ENCODE measurements at regions of chr13 and their contacts with region 1.

Region 1: DNA sequence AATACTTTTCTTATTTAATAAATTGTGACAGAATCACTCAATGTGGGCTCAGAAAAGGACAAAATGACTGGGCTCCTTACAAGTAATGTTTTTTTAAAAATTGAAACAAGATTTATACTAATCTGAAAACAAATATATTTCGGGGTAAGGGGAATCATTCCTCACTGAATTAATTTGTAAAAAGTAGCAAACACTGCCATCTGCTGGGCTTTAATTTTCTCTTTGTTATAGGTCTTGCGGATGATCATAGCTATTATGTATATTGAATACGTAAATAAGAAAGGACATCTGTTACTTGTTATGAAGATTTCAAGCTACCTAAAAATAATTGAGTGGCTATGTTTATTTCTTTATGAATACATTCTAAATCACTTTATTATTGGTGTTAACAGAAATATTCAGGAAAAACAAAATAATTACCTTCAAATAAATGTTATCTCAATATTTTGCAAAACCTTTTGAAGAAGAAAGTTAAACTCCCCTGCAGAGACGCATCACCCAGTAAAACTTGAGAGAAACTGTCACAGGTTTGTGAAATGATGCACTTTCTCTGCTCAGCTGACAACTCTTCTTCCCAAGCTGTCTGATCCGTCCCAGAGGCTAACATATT is 17.8 kb upstream of the ENOX1 start:
- DNase-seq: peak; percentile 83
- H3K4me3 ChIP-seq: no peak overlapping the region
- H3K27ac ChIP-seq: no peak overlapping the region
- H3K4me1 ChIP-seq: no peaks in the 10 kb centered on the region
- H3K27me3 ChIP-seq: no peaks in the 10 kb centered on the region
- CTCF ChIP-seq: peak; percentile 67

Region 2: GRCh38 chr13:42594970-42595571 is 1209.5 kb before region 1 on chr13:
- CTCF ChIA-PET with region 1: no interaction called
- POLR2A ChIA-PET with region 1: no interaction called
- intact Hi-C with region 1: loop called (anchors 5 kb)
- DNase-seq: peak; percentile 77
- H3K4me3 ChIP-seq: no peak overlapping the region
- H3K27ac ChIP-seq: no peak overlapping the region
- H3K4me1 ChIP-seq: no peaks in the 10 kb centered on the region
- H3K27me3 ChIP-seq: peaks cover 30% of the 10 kb centered on the region
- CTCF ChIP-seq: peak; percentile 89

Region 3: DNA sequence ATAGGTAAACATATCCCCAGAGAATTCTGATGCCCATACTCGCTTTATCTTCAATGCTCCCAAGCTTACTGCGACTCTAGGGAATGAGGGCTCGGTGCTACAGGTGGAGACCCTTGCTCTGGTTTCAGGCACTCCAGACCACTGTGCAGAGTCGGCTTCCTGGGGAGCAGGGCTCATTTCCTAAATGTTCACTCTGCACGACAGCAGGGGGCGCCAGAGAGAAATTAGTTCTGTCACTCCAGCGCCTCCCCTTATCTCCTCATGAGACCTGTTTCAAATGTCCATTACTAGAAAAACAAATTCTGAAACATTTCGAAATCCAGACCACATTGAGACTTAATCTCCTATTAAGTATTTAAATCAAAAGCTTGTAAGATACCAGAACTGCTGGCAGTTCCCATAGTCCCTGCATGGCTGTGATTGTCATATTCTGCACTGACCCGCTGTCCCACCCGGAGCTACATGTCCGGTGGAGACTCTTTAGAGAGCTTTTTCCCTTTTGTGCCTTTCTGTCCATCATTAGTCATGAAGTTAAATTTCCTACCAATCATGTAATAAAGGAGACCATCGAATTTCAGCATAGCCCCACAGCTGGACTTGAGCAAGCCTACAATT is 834.9 kb before region 1 on chr13:
- CTCF ChIA-PET with region 1: no interaction called
- POLR2A ChIA-PET with region 1: no interaction called
- intact Hi-C with region 1: loop called (anchors 5 kb)
- DNase-seq: peak; percentile 83
- H3K4me3 ChIP-seq: no peak overlapping the region
- H3K27ac ChIP-seq: no peak overlapping the region
- H3K4me1 ChIP-seq: peaks cover 9% of the 10 kb centered on the region
- H3K27me3 ChIP-seq: no peaks in the 10 kb centered on the region
- CTCF ChIP-seq: peak; percentile 85

Region 4: DNA sequence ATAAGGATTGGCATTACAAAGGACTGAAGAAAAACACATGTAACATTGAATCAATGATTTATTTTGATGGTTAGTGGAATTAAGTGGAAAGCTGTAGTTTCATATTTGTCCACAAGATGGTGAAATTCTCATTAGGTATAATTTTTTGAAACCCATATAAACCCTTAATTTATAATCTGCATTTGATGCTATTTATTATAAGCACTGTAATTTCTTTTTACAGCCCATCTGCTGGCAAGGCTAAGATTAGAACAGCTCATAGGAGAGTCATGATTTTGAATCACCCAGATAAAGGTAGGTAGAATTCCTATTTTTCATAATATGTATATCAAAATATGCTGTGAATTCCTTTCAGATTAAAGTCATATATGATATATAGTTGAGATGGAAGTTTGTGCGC is 719.0 kb before region 1 on chr13:
- CTCF ChIA-PET with region 1: interaction called, 5 read pairs
- POLR2A ChIA-PET with region 1: no interaction called
- intact Hi-C with region 1: loop called (anchors 2 kb)
- DNase-seq: peak; percentile 40
- H3K4me3 ChIP-seq: no peak overlapping the region
- H3K27ac ChIP-seq: no peak overlapping the region
- H3K4me1 ChIP-seq: no peaks in the 10 kb centered on the region
- H3K27me3 ChIP-seq: no peaks in the 10 kb centered on the region
- CTCF ChIP-seq: peak; percentile 62

Region 5: GRCh38 chr13:43196086-43196621 is 608.4 kb before region 1 on chr13:
- CTCF ChIA-PET with region 1: interaction called, 4 read pairs
- POLR2A ChIA-PET with region 1: no interaction called
- intact Hi-C with region 1: loop called (anchors 10 kb)
- DNase-seq: peak; percentile 46
- H3K4me3 ChIP-seq: no peak overlapping the region
- H3K27ac ChIP-seq: no peak overlapping the region
- H3K4me1 ChIP-seq: peaks cover 5% of the 10 kb centered on the region
- H3K27me3 ChIP-seq: no peaks in the 10 kb centered on the region
- CTCF ChIP-seq: peak; percentile 43

Region 6: DNA sequence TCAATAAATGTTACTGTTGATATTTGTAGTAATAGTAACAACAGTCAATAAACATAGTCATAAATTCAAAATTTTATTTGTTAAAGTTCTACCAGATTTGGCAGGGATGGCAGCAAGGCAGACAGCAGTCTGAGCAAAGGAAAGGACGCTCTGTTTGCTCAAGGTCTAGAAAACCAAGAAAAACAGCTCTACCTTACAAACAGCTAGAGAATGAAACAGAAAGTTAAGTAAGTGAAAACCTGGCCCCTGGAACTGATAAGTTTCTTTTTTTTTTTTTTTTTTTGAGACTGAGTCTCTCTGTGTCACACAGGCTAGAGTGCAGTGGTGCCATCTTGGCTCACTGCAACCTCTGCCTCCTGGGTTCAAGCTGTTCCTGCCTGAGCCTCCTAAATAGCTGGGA is 45.7 kb before region 1 on chr13:
- CTCF ChIA-PET with region 1: no interaction called
- POLR2A ChIA-PET with region 1: no interaction called
- intact Hi-C with region 1: no loop called
- DNase-seq: no peak
- H3K4me3 ChIP-seq: no peak overlapping the region
- H3K27ac ChIP-seq: no peak overlapping the region
- H3K4me1 ChIP-seq: no peaks in the 10 kb centered on the region
- H3K27me3 ChIP-seq: no peaks in the 10 kb centered on the region
- CTCF ChIP-seq: no peak